ENCODE measurements at regions of chr2 and their contacts with region 1.

Region 1: DNA sequence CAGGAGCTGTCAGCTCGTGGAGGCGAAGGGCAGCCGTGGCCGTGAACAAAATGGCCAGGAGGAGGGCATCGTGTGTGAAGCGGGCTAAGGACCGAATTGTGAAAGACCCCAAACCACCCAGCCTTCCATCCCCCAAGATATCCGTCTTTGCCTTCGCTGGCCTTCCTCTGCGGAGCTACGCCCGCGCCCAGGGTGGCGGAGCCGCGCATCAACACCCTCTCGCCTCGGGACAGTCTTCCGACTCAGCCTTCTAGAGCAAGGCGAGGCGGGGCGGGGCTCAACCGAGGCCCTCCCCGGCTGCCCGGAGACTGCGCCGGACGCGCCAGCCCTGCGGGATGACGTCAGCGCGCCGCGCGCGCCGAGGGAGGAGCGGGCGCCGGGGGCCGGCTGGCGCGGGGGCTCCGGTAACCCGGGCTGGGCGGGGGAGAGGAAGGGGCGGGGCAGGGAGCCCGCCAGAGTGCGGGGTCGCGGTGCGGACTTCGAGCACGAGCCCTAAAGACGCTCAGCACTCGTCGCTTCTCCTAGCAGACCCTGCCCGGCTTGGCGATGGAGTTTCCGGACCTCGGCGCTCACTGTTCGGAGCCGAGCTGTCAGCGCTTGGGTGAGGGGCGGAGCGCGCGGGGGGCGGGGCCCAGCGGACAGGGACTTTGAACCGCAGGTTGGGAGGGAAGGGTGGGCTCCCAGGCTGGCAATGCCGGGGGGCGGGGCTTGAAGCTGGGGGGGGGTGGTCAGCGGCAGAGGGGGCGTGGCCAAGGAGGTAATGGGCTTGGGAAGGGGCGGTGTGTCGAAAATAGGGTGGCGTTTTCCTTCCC is at the start of gene ZFAND2B:
- DNase-seq: peak; percentile 96
- ATAC-seq: peak; percentile 95
- H3K4me3 Mint-ChIP-seq: peak within 1 kb of the TSS; percentile 81
- H3K27ac Mint-ChIP-seq: peak within 1 kb of the TSS; percentile 93
- H3K4me1 Mint-ChIP-seq: peaks cover 53% of the 10 kb centered on the region
- H3K27me3 Mint-ChIP-seq: no peaks in the 10 kb centered on the region
- total RNA-seq, gene ZFAND2B: 60.2 to 60.6 TPM

Region 2: GRCh38 chr2:219171231-219171651 is 35.4 kb before region 1 on chr2:
- CTCF ChIA-PET with region 1: interaction called, 66 read pairs
- DNase-seq: no peak
- ATAC-seq: peak; percentile 45
- H3K4me3 Mint-ChIP-seq: no peak overlapping the region
- H3K27ac Mint-ChIP-seq: no peak overlapping the region
- H3K4me1 Mint-ChIP-seq: peaks cover 36% of the 10 kb centered on the region
- H3K27me3 Mint-ChIP-seq: no peaks in the 10 kb centered on the region

Region 3: GRCh38 chr2:219177552-219178376 is 28.9 kb before region 1 on chr2 and contains the start of gene RETREG2:
- CTCF ChIA-PET with region 1: interaction called, 66 read pairs
- DNase-seq: peak; percentile 86
- ATAC-seq: peak; percentile 54
- H3K4me3 Mint-ChIP-seq: peak within 1 kb of the TSS; percentile 79
- H3K27ac Mint-ChIP-seq: peak within 1 kb of the TSS; percentile 99
- H3K4me1 Mint-ChIP-seq: peaks cover 66% of the 10 kb centered on the region
- H3K27me3 Mint-ChIP-seq: no peaks in the 10 kb centered on the region
- total RNA-seq, gene RETREG2: 95.8 to 110 TPM

Region 4: DNA sequence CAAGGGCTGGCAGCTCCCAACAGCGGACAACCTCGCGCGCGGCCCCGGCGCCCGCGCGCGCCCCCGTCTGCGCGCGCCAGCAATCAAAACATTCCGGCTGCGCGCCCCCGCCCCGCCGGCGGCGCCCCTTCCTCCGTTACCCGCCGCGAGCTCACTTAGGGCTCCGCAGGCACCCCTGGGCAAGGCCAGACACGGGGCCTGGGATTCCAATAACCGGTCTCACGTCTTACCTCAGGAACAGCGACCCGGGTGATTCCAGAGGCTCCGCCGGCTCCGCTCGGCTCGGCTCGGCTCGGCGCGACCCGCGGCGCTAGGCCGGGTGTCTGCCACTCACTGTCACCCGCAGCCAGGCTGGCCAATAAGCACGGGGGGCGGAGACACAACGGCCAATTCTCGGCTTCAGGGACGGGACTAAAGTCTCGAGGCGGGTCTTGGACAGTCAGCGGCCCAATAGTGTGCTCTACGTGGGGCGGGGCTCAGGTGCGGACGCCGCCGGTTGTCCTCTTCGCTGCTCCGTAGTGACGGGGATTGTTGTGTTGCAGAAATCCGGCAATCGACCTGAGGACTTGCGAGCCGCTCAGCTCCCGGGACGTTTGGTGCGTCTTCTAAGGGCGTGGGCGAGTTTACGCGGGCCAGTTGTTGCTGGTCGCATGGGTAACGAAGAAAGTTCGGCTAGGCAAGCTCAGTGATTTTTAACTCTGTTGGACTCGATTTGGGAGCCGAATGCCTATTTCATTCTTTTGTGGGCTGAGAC is 22.8 kb after region 1 on chr2 and contains the starts of genes ANKZF1 and ATG9A:
- CTCF ChIA-PET with region 1: interaction called, 21 read pairs
- DNase-seq: peak; percentile 100
- ATAC-seq: peak; percentile 98
- H3K4me3 Mint-ChIP-seq: peak within 1 kb of the TSS; percentile 98
- H3K27ac Mint-ChIP-seq: peak within 1 kb of the TSS; percentile 95
- H3K4me1 Mint-ChIP-seq: peaks cover 65% of the 10 kb centered on the region
- H3K27me3 Mint-ChIP-seq: no peaks in the 10 kb centered on the region
- total RNA-seq, gene ANKZF1: 89.4 to 105 TPM
- total RNA-seq, gene ATG9A: 56.6 to 60.7 TPM

Region 5: DNA sequence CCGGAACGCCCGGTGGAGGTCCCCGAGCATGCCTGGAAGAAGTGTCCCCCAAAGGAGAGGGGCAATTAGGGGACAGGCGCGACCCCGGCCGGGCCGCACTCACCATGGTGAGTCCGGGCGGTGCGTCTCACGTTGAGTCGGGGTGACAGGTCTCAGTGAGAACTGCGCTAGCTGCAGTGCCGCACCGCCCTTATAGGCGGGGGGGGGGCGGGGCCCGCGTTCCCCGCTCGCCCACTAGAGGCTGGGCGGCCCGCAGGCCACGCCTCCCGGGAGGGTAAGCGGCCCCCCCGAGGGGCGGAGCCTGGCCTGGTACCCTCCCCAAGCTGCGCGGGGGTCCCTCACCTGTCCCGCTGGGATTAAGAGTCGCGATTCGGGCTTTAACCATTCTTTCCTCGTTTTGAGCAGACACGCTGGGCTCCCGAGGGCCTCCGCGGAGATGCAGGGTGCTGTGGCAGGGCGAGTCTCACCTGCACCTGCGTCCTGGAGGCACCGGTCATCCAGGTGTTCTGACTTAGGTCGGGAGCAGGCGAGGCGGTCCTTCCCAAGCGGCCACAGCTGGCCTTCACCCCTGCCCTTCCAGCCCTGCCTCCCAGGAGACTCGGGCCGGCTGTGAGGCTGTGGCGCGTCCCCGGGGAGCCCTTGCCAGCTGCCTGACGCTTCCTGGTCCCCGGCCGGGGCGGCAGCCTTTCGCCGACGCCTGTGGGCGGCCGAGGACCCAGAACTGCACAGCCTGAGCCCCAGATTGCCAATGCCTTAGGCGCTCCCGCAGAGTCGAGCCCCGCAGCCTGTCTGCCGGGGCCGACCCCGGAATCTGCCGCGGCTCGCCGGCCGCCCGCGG is 47.3 kb after region 1 on chr2 and contains the start of gene TUBA4A:
- CTCF ChIA-PET with region 1: interaction called, 20 read pairs
- DNase-seq: peak; percentile 92
- ATAC-seq: peak; percentile 76
- H3K4me3 Mint-ChIP-seq: peak within 1 kb of the TSS; percentile 99
- H3K27ac Mint-ChIP-seq: peak within 1 kb of the TSS; percentile 97
- H3K4me1 Mint-ChIP-seq: peaks cover 44% of the 10 kb centered on the region
- H3K27me3 Mint-ChIP-seq: peaks cover 3% of the 10 kb centered on the region
- total RNA-seq, gene TUBA4A: 244 to 337 TPM

Measured in activated CD8-positive, alpha-beta memory T cell treated with anti-CD3 and anti-CD28 coated beads, Interleukin-2, amount 10 ng/mL, durations not matched to agents 7 days and 5 days (primary cell).